ENCODE measurements at regions of chr10 and their contacts with region 1.

Region 1: GRCh38 chr10:87734987-87735827 is 75.5 kb downstream of the PAPSS2 start:
- DNase-seq: no peak
- ATAC-seq: peak; percentile 90

Region 2: DNA sequence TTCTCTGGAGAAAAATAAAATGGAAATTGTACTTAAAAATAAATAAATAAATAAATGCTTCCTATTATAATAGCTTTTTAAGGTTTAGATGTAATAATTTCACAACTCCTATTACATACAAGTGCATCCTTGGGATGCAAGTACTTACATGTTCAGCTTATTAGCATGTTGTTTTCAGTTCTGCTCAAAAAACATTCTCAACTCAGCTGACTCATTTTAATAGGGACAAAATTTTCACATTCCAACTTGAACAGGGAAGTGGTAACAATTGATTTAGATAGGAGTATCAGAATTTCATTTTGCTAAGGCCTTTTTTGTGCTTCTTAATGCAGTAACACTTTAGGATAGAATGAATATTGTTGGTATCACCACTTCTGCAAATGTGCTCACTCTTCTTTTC is 92.2 kb before region 1 on chr10:
- intact Hi-C with region 1: loop called (anchors 5 kb)
- DNase-seq: no peak
- ATAC-seq: no peak

Region 3: DNA sequence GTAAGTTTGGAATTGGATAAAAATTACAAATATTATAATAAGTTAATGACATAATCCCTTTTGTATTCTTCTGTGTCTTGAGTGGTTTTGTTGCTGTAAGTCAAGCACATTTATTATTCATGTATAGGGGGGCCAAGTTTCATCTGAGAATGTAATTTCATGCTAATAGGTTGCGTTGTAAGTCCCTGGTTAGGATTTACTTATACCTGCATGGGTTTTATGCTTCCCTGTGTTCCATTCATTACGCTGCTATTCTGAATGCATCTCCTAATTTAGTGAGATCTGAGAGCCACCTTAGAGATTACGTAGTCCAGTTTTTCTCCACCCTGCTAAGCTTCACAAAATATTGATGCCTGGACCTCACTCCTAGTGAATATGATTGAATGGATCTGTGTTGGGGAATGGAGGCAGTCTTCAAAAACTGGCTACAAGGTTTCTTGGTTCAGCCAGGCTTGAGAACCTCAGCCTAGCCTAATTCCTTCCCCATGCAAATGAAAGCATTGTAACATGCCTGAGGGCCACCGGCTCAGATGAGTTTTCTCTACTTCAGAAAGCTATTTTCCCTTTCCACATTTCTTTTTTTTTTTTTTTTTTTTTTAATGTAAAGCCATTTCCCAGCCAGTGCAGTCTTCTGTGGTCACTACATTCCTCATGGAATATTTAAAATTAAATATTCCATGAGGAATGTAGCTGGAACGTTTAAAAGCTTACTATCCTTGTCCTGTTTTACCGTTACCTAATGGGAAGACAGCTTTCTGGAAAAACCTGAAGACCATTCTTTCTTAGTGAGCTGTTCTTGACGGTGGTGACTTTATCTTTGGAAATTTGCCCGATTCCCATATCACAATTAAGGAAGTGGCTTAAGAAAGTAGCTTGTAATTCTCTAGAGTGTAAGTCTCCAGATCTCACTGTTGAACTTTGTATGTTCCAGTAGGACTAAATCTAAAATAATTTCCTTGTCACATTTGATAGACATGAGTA is 59.5 kb before region 1 on chr10:
- intact Hi-C with region 1: no loop called
- DNase-seq: no peak
- ATAC-seq: no peak

Region 4: GRCh38 chr10:87925570-87925969 is 190.4 kb after region 1 on chr10:
- intact Hi-C with region 1: no loop called
- DNase-seq: no peak
- ATAC-seq: no peak

Measured in sciatic nerve (tissue), 2 donors.